H1 (cell line): ENCODE measurements at regions of chr11 and their contacts with region 1.

Region 1: DNA sequence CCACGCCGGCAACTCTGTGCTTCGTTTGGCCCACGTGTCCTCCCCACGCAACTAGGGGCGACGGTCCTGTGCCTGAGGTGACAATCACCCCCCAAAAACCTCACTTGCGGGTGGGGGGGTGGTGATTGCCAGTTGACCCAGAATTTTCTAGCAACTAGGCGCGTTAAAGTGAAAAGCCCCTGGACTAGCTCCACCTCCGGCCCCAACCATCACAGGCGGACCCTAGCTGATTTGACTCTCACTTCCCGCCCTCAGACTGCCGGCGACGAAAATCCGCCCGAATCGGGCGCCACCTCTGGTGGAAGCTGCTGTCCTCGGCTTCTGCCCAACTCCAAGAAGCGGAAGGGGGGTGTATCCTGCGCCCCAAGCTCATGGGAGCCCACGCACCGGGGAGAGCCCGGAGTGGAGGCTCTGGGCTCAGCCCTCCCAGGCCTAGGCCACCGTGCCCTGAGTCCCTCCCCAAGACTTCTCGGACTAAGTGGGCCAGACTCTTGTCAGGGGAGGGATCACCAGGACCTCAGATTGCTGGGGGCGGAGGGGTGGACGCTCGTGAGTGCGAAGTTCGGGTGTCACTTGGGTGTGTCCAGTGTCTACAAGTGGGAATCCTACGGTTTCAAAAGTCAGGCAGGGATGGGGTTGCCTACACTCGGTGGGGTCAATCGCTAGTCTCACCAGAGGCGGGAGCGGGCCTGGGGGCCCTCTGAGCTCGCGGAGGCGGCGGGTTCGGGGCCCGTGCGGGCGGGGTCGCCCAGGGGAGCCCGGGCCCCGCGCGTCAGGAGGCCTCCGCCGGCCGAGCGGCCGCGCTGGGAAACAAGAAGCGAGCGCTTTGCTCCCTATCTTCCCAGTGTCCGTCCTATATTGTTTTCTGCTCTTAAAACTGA is 12.3 kb downstream of the PAX6 start:
- DNase-seq: peak in 1 of 2 experiments; percentile 89
- H3K4me3 ChIP-seq: peak overlapping the region; percentile 45 to 62 (median 51)
- H3K27ac ChIP-seq: no peak overlapping the region
- H3K4me1 ChIP-seq: peaks cover 18 to 30% (median 19%) of the 10 kb centered on the region in 4 experiments
- H3K27me3 ChIP-seq: peaks cover 71 to 86% (median 82%) of the 10 kb centered on the region in 4 experiments
- CTCF ChIP-seq: peak; percentile 65 to 75 (median 66)
- EP300 ChIP-seq: peak in 1 of 2 experiments; percentile 50; a peak in 1 of 3 replicates
- POLR2A ChIP-seq: no peak
- RAD21 ChIP-seq: peak; percentile 61 to 73

Region 2: GRCh38 chr11:31601635-31602282 is 197.0 kb before region 1 on chr11:
- CTCF ChIA-PET with region 1: no interaction called
- POLR2A ChIA-PET with region 1: no interaction called
- DNase-seq: no peak
- H3K4me3 ChIP-seq: no peak overlapping the region
- H3K27ac ChIP-seq: no peak overlapping the region
- H3K4me1 ChIP-seq: peaks cover 0 to 7% (median 1%) of the 10 kb centered on the region in 4 experiments; a peak in 4 of 7 replicates
- H3K27me3 ChIP-seq: no peaks in the 10 kb centered on the region
- CTCF ChIP-seq: no peak
- EP300 ChIP-seq: no peak
- POLR2A ChIP-seq: no peak
- RAD21 ChIP-seq: no peak

Region 3: GRCh38 chr11:31641477-31642062 is 157.2 kb before region 1 on chr11:
- CTCF ChIA-PET with region 1: interaction called, 17 read pairs
- POLR2A ChIA-PET with region 1: no interaction called
- DNase-seq: peak; percentile 17 to 59
- H3K4me3 ChIP-seq: no peak overlapping the region
- H3K27ac ChIP-seq: no peak overlapping the region
- H3K4me1 ChIP-seq: no peaks in the 10 kb centered on the region
- H3K27me3 ChIP-seq: no peaks in the 10 kb centered on the region
- CTCF ChIP-seq: peak; percentile 54 to 72 (median 70)
- EP300 ChIP-seq: no peak
- POLR2A ChIP-seq: no peak
- RAD21 ChIP-seq: peak; percentile 79

Region 4: GRCh38 chr11:31690041-31690440 is 108.8 kb before region 1 on chr11:
- CTCF ChIA-PET with region 1: no interaction called
- POLR2A ChIA-PET with region 1: no interaction called
- DNase-seq: no peak
- H3K4me3 ChIP-seq: no peak overlapping the region
- H3K27ac ChIP-seq: no peak overlapping the region
- H3K4me1 ChIP-seq: peaks cover 0 to 3% (median 0%) of the 10 kb centered on the region in 4 experiments; a peak in 1 of 7 replicates
- H3K27me3 ChIP-seq: no peaks in the 10 kb centered on the region
- CTCF ChIP-seq: no peak
- EP300 ChIP-seq: no peak
- POLR2A ChIP-seq: no peak
- RAD21 ChIP-seq: no peak

Region 5: DNA sequence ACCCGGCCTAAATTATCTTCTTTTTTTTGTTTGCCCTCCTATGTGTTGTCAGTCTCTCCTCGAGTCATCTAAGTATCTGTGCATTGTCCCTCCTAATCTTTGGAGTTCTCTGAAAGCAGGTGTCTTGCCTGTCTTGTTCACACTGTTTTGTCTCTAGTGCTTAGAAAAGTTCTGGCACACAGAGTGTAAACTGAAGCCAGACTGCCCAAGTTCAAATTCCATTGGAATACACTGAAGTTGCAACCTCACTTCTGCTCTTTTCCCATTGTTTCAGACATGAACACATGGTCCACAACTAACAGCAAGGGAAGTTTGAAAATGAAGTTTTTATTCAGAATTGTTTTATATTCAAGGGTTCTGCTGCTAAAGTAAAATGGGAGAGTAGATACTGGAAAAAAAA is 26.4 kb before region 1 on chr11:
- CTCF ChIA-PET with region 1: no interaction called
- POLR2A ChIA-PET with region 1: no interaction called
- DNase-seq: no peak
- H3K4me3 ChIP-seq: no peak overlapping the region
- H3K27ac ChIP-seq: no peak overlapping the region
- H3K4me1 ChIP-seq: peaks cover 0 to 5% (median 0%) of the 10 kb centered on the region in 4 experiments; a peak in 1 of 7 replicates
- H3K27me3 ChIP-seq: no peaks in the 10 kb centered on the region
- CTCF ChIP-seq: no peak
- EP300 ChIP-seq: no peak
- POLR2A ChIP-seq: no peak
- RAD21 ChIP-seq: no peak

Region 6: DNA sequence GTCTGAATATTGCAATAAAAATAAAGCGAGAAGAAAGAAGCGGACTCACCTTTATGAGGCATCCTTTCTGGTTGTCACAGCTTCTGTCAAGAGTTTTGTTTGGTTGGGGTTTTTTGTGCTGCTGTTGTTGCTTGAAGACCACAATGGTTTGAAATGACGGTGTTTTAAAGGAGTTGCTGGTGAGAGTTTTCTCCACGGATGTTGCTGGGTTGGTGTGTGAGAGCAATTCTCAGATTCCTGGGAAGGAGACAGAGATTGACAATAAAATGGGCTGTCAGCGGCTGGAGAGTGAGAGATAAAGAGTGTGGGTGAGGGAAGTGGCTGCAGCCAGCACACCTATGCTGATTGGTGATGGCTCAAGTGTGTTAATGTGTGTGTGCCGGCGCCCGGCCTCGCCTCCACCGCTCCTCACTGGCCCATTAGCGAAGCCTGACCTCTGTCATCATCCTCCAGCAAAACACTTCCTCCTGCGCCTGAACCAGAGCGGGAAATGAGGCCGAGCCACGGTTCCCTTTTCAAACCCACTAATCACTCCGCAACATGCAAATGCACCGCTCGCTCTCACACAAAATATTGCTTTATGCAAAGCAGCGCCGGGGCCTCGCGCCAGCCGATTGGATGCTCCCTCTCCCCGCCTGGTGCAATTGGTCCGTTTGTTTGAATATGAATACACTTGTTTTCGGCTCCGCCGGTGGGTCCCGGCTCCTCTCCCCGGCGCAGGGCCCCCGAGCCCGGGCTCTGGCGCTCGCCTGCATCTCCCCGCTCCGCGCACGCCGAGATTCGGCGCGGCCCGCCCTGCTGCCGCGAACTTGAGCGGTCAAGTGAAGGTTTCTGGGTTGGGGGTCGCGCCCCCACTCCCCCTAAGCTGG is 12.2 kb after region 1 on chr11 and contains the start of gene PAX6:
- CTCF ChIA-PET with region 1: interaction called, 88 read pairs
- POLR2A ChIA-PET with region 1: interaction called, 8 read pairs
- DNase-seq: peak in 1 of 2 experiments; percentile 87
- H3K4me3 ChIP-seq: peak within 1 kb of the TSS; percentile 36 to 62 (median 50)
- H3K27ac ChIP-seq: no peak within 1 kb of the TSS
- H3K4me1 ChIP-seq: peaks cover 22 to 51% (median 41%) of the 10 kb centered on the region in 4 experiments
- H3K27me3 ChIP-seq: peaks cover 87 to 99% (median 96%) of the 10 kb centered on the region in 4 experiments
- CTCF ChIP-seq: no peak
- EP300 ChIP-seq: no peak
- POLR2A ChIP-seq: no peak
- RAD21 ChIP-seq: no peak
- total RNA-seq, gene PAX6: 0.21 and 0.30 TPM in 2 replicates

Region 7: GRCh38 chr11:31817054-31817620 is 18.3 kb after region 1 on chr11:
- CTCF ChIA-PET with region 1: interaction called, 88 read pairs
- POLR2A ChIA-PET with region 1: interaction called, 10 read pairs
- DNase-seq: peak in 1 of 2 experiments; percentile 64
- H3K4me3 ChIP-seq: peak overlapping the region in 3 of 4 experiments; percentile 35 to 62 (median 45); a peak in 5 of 8 replicates
- H3K27ac ChIP-seq: no peak overlapping the region
- H3K4me1 ChIP-seq: peaks cover 3 to 70% (median 47%) of the 10 kb centered on the region in 4 experiments
- H3K27me3 ChIP-seq: peaks cover 79 to 100% (median 98%) of the 10 kb centered on the region in 4 experiments
- CTCF ChIP-seq: no peak
- EP300 ChIP-seq: no peak
- POLR2A ChIP-seq: no peak
- RAD21 ChIP-seq: no peak